MCF 10A (cell line): ENCODE measurements at regions of chr12 and their contacts with region 1.

Region 1: DNA sequence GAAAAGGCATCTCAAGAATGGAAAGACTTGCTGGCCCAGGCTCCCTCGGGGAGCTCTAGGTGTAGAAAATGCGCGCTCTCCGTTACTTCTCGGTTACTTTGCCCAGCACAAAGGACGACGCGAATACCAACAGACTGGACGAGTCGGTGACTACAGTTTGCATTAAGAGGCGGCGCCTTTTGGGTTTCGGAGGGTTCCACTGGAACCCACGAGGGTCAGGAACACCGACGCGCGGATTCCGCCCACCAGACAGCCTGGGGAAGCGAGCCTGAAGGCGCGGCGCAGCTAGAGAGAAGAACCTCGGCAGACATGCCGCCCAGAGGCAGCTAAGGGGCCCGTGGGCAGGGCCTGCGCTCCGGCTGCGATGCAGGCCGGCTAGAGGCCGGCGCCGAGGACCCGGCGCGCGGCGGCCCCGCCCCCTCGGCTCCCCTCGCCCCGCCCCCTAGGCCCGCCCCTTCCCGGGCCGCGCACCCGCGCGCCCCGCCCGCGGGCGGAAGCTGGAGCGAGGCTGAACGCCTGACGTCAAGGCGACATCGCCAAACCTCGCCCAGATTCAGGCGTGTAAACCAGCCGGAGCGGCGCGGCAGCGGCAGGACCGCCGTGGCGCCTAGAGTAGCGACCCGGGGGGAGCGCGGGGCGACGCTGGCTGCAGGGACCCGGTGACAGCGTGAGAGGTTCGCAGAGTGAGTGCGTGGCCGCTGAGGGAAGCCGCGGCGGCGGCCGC is at the start of gene RAP1B:
- DNase-seq: peak; percentile 91
- H3K4me3 Mint-ChIP-seq: peak within 1 kb of the TSS; percentile 87
- H3K27ac Mint-ChIP-seq: peak within 1 kb of the TSS; percentile 96
- H3K4me1 Mint-ChIP-seq: peaks cover 28% of the 10 kb centered on the region
- H3K27me3 Mint-ChIP-seq: no peaks in the 10 kb centered on the region
- CTCF ChIP-seq: no peak
- total RNA-seq, gene RAP1B: 180 and 232 TPM in 2 replicates

Region 2: GRCh38 chr12:68358532-68359485 is 251.7 kb before region 1 on chr12:
- CTCF ChIA-PET with region 1: interaction called, 4 read pairs
- POLR2A ChIA-PET with region 1: interaction called, 13 read pairs
- intact Hi-C with region 1: loop called (anchors 2 kb)
- DNase-seq: peak; percentile 76
- H3K4me3 Mint-ChIP-seq: no peak overlapping the region
- H3K27ac Mint-ChIP-seq: no peak overlapping the region
- H3K4me1 Mint-ChIP-seq: peaks cover 4% of the 10 kb centered on the region
- H3K27me3 Mint-ChIP-seq: no peaks in the 10 kb centered on the region
- CTCF ChIP-seq: peak; percentile 56

Region 3: DNA sequence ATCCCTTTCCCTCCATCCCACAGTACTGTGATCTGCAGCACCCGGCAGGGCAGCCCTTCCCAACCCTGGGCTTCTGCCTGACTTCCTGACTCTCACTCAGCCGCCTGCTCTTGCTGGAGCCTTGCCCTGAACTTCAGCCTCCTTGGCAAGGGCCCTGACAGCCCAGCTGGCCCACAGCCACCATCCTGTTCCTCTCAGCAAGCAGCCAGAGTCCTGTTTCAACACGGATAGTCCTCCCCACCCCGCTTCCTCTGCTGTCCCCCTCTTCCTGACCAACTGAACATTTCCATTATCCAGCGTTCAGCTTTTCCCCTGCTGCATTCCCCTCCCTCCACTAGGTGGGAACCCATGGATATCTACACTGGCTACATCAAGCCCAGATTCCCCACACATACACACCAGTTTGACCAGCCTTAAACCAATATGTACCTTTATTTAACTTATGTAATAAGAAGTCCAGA is 204.4 kb before region 1 on chr12:
- CTCF ChIA-PET with region 1: no interaction called
- POLR2A ChIA-PET with region 1: interaction called, 3 read pairs
- intact Hi-C with region 1: loop called (anchors 5 kb)
- DNase-seq: peak; percentile 91
- H3K4me3 Mint-ChIP-seq: peak overlapping the region; percentile 30
- H3K27ac Mint-ChIP-seq: peak overlapping the region; percentile 6
- H3K4me1 Mint-ChIP-seq: peaks cover 19% of the 10 kb centered on the region
- H3K27me3 Mint-ChIP-seq: no peaks in the 10 kb centered on the region
- CTCF ChIP-seq: peak; percentile 21

Region 4: DNA sequence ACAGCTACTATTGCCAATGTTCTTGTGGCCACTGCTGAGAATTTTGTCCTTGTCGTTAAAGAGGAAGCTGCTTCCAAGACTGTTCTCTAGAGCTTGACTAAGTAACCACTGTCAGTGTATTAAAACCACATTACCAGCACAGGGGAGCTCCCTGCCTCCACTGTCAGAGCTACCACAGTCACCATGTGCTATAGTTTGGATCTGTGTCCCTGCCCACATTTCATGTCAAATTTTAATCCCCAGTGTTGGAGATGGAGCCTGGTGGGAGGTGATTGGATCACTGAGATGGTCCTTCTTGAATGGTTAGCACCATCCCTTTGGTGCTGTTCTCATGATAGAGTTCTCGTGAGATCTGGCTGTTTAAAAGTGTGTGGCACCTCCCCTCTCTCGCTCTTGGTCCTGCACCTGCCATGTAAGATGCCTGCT is 23.1 kb before region 1 on chr12:
- CTCF ChIA-PET with region 1: interaction called, 6 read pairs
- POLR2A ChIA-PET with region 1: interaction called, 16 read pairs
- intact Hi-C with region 1: no loop called
- DNase-seq: no peak
- H3K4me3 Mint-ChIP-seq: no peak overlapping the region
- H3K27ac Mint-ChIP-seq: no peak overlapping the region
- H3K4me1 Mint-ChIP-seq: peaks cover 6% of the 10 kb centered on the region
- H3K27me3 Mint-ChIP-seq: no peaks in the 10 kb centered on the region
- CTCF ChIP-seq: no peak

Region 5: GRCh38 chr12:68630050-68630449 is 19.5 kb after region 1 on chr12:
- CTCF ChIA-PET with region 1: interaction called, 4 read pairs
- POLR2A ChIA-PET with region 1: interaction called, 37 read pairs
- intact Hi-C with region 1: no loop called
- DNase-seq: no peak
- H3K4me3 Mint-ChIP-seq: no peak overlapping the region
- H3K27ac Mint-ChIP-seq: peak overlapping the region; percentile 31
- H3K4me1 Mint-ChIP-seq: peaks cover 17% of the 10 kb centered on the region
- H3K27me3 Mint-ChIP-seq: no peaks in the 10 kb centered on the region
- CTCF ChIP-seq: no peak

Region 6: DNA sequence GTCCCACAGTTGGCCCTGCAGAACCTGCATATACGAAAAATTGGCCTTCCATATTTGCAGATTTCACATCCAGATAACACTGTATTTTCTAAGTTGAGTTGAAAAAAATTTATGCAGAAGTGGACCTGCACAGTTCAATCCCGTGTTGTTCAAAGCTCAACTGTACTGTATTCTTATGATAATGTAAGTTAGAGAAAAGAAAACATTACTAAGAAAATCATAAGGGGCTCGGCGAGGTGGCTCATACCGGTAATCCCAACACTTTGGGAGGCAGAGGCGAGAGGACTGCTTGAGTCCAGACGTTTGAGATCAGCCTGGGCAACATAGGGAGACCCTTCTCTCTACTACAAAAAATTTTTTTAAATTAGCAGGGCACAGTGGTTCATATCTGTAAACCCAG is 117.2 kb after region 1 on chr12:
- CTCF ChIA-PET with region 1: no interaction called
- POLR2A ChIA-PET with region 1: no interaction called
- intact Hi-C with region 1: no loop called
- DNase-seq: no peak
- H3K4me3 Mint-ChIP-seq: no peak overlapping the region
- H3K27ac Mint-ChIP-seq: no peak overlapping the region
- H3K4me1 Mint-ChIP-seq: no peaks in the 10 kb centered on the region
- H3K27me3 Mint-ChIP-seq: no peaks in the 10 kb centered on the region
- CTCF ChIP-seq: no peak

Region 7: DNA sequence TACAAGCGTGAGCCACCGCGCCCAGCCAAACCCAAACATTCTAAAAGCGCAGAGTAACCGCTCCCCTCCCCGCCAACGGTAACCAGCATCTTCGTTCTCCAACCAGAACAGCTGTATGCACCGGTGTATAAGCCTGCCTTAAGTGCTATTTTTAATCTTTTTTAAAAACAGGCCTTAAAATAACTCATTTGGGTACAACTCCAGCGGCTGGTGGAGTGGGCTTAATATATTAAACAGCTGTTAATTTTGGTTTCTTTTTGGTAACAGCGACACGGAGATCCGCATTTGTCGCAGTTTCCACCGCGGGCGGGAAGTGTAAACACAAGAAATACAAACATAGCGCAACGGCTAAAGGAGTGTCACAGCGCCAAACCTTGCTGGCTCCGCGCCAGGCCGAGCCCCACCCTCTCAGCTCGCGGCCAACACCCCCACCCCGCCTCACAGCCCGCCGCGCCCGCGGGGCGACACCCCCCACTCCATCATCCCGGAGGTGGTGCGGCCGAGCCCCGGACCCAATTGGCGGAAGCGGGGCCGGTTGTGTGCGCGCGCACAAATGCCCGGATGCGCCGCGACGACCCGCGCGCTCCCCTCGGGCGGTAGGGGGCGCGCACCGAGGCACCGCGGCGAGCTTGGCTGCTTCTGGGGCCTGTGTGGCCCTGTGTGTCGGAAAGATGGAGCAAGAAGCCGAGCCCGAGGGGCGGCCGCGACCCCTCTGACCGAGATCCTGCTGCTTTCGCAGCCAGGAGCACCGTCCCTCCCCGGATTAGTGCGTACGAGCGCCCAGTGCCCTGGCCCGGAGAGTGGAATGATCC is 197.2 kb after region 1 on chr12 and contains the start of gene MDM2:
- CTCF ChIA-PET with region 1: no interaction called
- POLR2A ChIA-PET with region 1: interaction called, 18 read pairs
- intact Hi-C with region 1: no loop called
- DNase-seq: peak; percentile 91
- H3K4me3 Mint-ChIP-seq: peak within 1 kb of the TSS; percentile 90
- H3K27ac Mint-ChIP-seq: peak within 1 kb of the TSS; percentile 94
- H3K4me1 Mint-ChIP-seq: peaks cover 8% of the 10 kb centered on the region
- H3K27me3 Mint-ChIP-seq: no peaks in the 10 kb centered on the region
- CTCF ChIP-seq: peak; percentile 67
- total RNA-seq, gene MDM2: 353 and 383 TPM in 2 replicates